ENCODE measurements at regions of chr11 and their contacts with region 1.

Region 1: GRCh38 chr11:10878408-10879214 is 20.8 kb upstream of the ZBED5 start:
- DNase-seq: peak; percentile 21
- H3K4me3 Mint-ChIP-seq: no peak overlapping the region
- H3K27ac Mint-ChIP-seq: peak overlapping the region; percentile 34
- H3K4me1 Mint-ChIP-seq: peaks cover 20% of the 10 kb centered on the region
- H3K27me3 Mint-ChIP-seq: no peaks in the 10 kb centered on the region

Region 2: DNA sequence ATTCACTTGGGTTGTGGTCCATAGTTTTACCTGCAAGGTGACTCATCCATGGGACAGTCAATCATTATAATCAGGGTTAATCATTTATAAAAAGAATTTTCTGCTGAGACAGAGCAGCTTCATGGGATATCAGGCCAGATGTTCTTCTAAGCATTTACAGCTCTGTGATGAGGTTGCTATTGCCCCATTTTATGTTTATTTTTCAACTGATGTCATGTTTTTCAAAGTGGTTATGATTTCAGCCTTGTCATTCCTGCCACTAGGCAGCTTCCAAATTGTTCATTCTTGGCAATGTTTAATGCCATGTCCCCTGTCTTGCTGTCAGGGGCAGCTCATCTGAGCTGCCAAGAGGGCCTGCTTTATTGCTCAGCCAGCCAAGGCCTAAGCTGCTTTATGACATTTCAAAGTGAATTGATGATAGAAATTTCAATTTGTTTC is 15.1 kb after region 1 on chr11:
- CTCF ChIA-PET with region 1: interaction called, 13 read pairs
- intact Hi-C with region 1: no loop called
- DNase-seq: no peak
- H3K4me3 Mint-ChIP-seq: no peak overlapping the region
- H3K27ac Mint-ChIP-seq: no peak overlapping the region
- H3K4me1 Mint-ChIP-seq: no peaks in the 10 kb centered on the region
- H3K27me3 Mint-ChIP-seq: peaks cover 2% of the 10 kb centered on the region

Region 3: GRCh38 chr11:10900681-10901415 is 22.2 kb after region 1 on chr11:
- CTCF ChIA-PET with region 1: interaction called, 12 read pairs
- intact Hi-C with region 1: no loop called
- DNase-seq: no peak
- H3K4me3 Mint-ChIP-seq: no peak overlapping the region
- H3K27ac Mint-ChIP-seq: no peak overlapping the region
- H3K4me1 Mint-ChIP-seq: peaks cover 17% of the 10 kb centered on the region
- H3K27me3 Mint-ChIP-seq: no peaks in the 10 kb centered on the region

Region 4: GRCh38 chr11:10926801-10927211 is 48.2 kb after region 1 on chr11:
- CTCF ChIA-PET with region 1: interaction called, 7 read pairs
- intact Hi-C with region 1: loop called (anchors 2 kb)
- DNase-seq: no peak
- H3K4me3 Mint-ChIP-seq: no peak overlapping the region
- H3K27ac Mint-ChIP-seq: no peak overlapping the region
- H3K4me1 Mint-ChIP-seq: peaks cover 5% of the 10 kb centered on the region
- H3K27me3 Mint-ChIP-seq: peaks cover 17% of the 10 kb centered on the region

Measured in activated naive CD4-positive, alpha-beta T cell treated with anti-CD3 and anti-CD28 coated beads for 36 hours (primary cell).